Activated T-helper 1 cell treated with anti-CD3 and anti-CD28 coated beads, Interleukin-12 subunit alpha, Interleukin-12 subunit beta, Interleukin-2, Interleukin-4 antibody, amounts not matched to agents 30 ng/mL and 10 ng/mL and 1 ng/mL, durations not matched to agents 14 hours and 24 hours and 36 hours (primary cell): ENCODE measurements at regions of chr4 and their contacts with region 1.

Region 1: GRCh38 chr4:118270492-118270891 is 82.3 kb downstream of the PRSS12 start:
- DNase-seq: no peak
- H3K4me3 Mint-ChIP-seq: no peak overlapping the region
- H3K27ac Mint-ChIP-seq: no peak overlapping the region
- H3K4me1 Mint-ChIP-seq: no peaks in the 10 kb centered on the region
- H3K27me3 Mint-ChIP-seq: peaks cover 5% of the 10 kb centered on the region

Region 2: GRCh38 chr4:116358588-116359222 is 1911.8 kb before region 1 on chr4:
- intact Hi-C with region 1: loop called (anchors 1 kb)
- DNase-seq: peak; percentile 21
- H3K4me3 Mint-ChIP-seq: no peak overlapping the region
- H3K27ac Mint-ChIP-seq: no peak overlapping the region
- H3K4me1 Mint-ChIP-seq: no peaks in the 10 kb centered on the region
- H3K27me3 Mint-ChIP-seq: no peaks in the 10 kb centered on the region

Region 3: DNA sequence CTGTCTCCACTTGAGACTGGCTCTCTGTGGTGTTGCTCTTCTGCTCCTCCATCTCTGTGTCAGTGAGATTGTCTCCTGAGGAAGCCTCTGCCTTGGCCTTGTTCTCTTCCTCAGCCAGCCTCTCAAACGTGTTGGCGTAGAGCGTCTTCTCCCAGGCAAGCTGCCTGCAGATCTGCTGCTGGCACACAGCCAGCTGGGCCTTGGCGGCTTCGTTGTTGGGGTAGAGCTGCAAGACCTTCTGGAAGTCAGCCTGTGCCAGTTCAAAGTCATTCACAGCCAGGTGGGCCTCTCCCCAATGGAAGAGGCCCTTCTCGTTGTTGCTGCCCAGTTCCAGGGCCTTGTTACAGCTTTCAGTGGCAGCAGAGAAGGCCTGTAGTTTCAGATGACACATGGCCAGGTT is 77.1 kb before region 1 on chr4:
- intact Hi-C with region 1: no loop called
- DNase-seq: no peak
- H3K4me3 Mint-ChIP-seq: no peak overlapping the region
- H3K27ac Mint-ChIP-seq: no peak overlapping the region
- H3K4me1 Mint-ChIP-seq: no peaks in the 10 kb centered on the region
- H3K27me3 Mint-ChIP-seq: peaks cover 2% of the 10 kb centered on the region